ENCODE measurements at regions of chr2 and their contacts with region 1.

Region 1: GRCh38 chr2:47323009-47323821 is 79.7 kb upstream of the MSH2 start:
- DNase-seq: no peak
- H3K4me3 ChIP-seq: no peak overlapping the region
- CTCF ChIP-seq: peak; percentile 96

Region 2: DNA sequence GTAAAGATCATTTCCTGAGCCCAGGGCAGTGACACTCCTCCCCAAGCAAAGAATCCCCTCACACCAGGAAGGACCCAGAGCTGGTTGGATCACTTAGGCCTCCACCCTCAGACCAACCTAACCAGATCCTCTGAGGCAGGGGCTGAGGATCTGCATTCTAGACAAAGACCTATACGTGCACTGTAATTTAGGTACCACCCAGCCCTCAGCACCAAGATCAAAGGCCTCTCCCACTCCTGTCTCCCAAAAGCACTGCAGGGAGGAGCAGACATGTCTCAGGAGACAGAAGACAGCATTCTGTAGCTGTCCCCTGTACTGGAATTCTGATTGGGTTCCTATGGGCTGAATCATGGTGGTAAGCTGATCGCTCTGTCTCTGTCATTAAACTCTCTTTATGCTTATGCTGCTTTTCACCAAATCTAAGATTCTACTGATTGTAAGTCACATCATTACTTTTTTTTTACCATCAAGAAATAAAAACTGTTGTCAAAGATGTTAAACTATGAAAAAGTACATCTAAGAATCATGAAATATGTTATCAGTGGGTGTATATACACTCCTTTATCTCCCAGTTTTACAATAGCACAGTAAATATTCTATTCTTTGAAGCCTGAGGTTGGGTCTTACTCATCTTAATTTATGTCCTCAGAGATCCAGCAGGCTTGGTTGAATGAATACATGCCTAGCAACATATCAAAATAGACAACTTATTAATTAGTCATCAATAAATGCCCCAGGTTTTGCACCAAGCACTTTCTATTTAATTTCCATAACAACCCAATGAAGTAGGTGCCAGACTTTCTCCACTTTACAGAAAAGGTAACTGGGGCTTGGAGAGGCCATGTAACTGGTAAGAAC is 436.0 kb before region 1 on chr2:
- CTCF ChIA-PET with region 1: interaction called, 13 read pairs
- POLR2A ChIA-PET with region 1: no interaction called
- DNase-seq: no peak
- H3K4me3 ChIP-seq: no peak overlapping the region
- CTCF ChIP-seq: no peak

Region 3: GRCh38 chr2:47016172-47016913 is 306.9 kb before region 1 on chr2:
- CTCF ChIA-PET with region 1: interaction called, 19 read pairs
- POLR2A ChIA-PET with region 1: interaction called, 3 read pairs
- DNase-seq: peak; percentile 91
- H3K4me3 ChIP-seq: no peak overlapping the region
- CTCF ChIP-seq: peak; percentile 54

Region 4: DNA sequence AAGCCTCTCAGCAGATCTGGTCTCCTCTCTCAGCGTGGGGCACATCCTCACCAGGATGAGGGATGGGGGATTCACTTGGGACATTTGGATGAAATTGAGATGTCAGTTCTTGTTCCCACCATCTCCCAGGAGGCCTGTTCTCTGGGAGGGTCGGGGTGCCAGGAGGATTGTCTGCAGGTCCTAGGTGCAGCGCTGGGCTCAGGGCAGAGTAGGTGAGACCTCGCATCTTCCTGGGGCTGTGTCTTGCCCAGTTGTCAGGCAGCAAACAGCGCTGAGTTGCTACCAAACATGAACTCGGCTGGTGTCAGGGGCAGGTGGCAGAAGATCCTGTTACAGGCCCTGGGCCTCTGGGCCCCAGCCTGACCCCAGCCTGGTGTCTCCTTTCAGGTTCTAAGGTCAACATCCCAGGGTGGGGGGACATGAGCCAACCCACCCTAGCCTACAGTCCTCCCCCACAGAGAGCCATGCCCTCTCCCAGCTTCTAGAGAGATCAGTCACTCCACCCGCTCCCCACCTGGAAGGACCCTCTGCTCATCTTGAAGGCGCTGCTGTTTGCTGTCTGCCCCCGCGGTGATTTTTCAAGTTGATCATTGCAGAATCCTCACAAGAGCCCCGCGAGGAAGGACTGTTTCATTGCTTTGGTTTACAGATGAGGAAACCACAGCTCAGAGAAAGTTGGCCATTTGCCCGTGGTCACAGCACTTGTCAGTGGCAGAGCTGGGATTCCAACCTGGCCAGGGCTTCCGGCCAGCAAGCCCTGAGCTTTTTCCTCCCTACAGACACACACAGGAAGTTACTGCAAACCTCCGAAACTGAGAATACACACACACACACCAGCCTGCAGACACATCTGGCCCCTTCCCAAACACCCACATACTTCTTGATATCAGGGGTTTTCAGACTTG is 252.0 kb before region 1 on chr2:
- CTCF ChIA-PET with region 1: interaction called, 23 read pairs
- POLR2A ChIA-PET with region 1: no interaction called
- DNase-seq: no peak
- H3K4me3 ChIP-seq: no peak overlapping the region
- CTCF ChIP-seq: no peak

Region 5: DNA sequence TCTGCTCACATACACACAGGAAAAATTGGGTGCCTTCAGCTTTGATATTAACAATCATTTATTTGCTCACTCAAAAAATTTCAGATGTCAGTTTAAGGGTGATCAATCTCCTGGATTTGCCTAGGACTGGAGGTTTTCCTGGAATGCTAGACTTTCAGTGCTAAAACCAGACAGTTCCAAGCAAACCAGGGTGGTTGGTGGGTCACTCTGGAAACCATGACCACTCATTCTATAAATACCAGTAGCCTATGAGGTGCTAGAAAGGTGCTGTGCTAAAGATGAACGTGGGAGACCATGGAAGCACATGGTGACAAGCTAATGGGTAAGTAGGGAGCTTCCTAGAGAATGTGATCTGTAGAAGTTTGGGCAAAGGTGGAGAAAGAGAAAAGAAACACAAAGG is 142.7 kb before region 1 on chr2:
- CTCF ChIA-PET with region 1: interaction called, 23 read pairs
- POLR2A ChIA-PET with region 1: no interaction called
- DNase-seq: no peak
- H3K4me3 ChIP-seq: no peak overlapping the region
- CTCF ChIP-seq: no peak

Region 6: GRCh38 chr2:47336259-47337238 is 13.3 kb after region 1 on chr2:
- CTCF ChIA-PET with region 1: interaction called, 58 read pairs
- POLR2A ChIA-PET with region 1: no interaction called
- DNase-seq: no peak
- H3K4me3 ChIP-seq: no peak overlapping the region
- CTCF ChIP-seq: no peak